ENCODE measurements at regions of chr3 and their contacts with region 1.

Region 1: GRCh38 chr3:191051037-191051436 is 148.0 kb upstream of the OSTN start:
- DNase-seq: no peak
- ATAC-seq: no peak

Region 2: DNA sequence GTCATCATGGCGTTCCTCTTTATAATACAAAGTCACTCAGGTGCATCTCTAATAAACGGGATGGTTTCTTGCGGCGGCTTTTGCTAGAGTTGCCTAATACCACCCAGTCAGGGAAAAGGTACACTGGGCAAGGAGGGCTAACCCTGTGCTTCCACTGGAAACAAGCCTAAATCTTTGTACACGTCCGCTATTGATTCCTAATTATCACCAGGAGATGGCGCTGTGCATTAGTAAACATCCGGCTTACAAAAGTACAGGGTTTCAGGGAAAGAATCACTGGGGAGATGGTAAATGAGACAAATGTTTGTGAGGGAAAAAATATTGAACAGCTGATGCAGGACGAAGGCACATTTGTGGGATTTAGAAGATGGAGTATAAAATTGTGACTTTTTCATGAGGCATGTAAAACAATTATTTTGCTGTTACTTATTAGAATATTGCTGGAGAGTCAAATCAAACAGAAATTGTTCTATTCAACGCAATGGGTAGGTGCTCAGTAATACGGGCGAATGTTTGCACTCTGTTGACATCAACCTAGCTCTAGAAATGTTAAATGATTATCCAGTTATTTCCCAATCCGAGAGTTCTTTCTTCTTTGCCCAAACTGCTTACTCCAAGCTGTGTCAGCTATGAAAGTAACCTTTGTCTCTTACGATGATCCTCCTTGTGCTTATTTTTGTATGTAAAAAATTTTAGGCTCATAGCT is 239.1 kb before region 1 on chr3:
- intact Hi-C with region 1: loop called in 1 of 2 experiments (anchors 5 kb)
- DNase-seq: no peak
- ATAC-seq: peak in 1 of 2 donors; percentile 32

Region 3: GRCh38 chr3:190886945-190887344 is 164.1 kb before region 1 on chr3:
- intact Hi-C with region 1: loop called (anchors 5 kb)
- DNase-seq: no peak
- ATAC-seq: peak in 1 of 2 donors; percentile 29

Region 4: DNA sequence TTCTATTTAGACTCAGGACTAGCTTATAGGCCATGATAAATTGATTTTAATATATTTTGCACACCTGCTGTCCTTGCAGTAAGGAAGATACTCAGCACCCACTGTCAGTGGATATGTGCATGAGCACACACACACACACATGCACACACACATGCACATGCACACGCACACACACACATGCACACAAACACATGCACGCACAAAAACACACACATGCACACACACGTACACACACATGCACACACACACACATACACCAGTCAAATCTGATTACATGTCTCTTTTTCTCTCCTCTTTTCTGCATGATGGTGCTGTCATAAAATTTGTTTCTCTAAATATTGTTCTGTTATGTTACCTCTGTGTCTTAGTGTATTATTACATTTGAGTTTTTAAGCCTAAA is 60.7 kb after region 1 on chr3:
- intact Hi-C with region 1: no loop called
- DNase-seq: no peak
- ATAC-seq: no peak